Adrenal gland (tissue), 19 donors: ENCODE measurements at regions of chr14 and their contacts with region 1.

Region 1: DNA sequence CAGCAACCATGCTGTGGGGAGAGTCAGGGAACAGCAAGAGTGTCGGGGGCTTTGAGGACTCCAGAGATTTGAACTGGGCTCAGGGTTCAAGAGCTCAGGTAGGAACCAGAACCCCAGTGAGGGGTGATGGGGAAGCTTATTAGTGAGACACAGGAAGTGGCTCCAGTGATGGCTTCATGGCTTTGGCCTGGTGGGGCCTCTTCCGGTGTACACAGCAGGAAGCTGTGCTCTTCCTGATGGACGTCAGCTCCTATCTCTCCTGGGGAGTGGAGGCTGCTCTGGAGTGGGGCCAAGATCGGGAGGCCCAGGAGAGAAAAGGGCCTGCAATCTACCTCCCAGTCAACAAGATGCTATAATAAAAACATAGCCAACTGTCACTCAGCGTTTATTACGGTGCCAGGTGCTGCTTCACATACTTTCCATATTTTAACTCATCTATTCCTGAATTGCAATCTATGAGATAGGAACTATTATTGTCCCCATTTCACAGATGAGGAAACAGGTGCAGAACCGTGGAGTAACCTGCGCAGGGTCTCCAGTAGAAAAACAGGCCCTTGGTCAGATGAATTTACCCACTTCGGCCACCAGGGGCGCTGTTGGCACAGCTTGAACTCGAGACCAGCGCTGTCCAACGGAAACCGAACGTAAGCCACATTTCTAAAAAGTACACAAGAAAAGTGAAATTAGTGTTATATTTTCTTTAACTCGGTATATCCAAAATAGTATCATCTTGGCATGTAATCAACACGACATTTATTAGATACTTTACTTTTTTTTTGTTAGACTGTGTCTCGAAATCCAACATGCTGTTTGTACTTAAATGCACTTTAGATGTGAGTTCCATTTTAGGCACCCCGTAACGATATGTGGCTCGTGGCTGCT is 63.6 kb upstream of the DLK1 start:
- DNase-seq: peak; percentile 71 to 93 (median 80)
- H3K4me3 ChIP-seq: peak overlapping the region in 1 of 4 donors; percentile 32
- H3K27ac ChIP-seq: peak overlapping the region in 3 of 5 donors; percentile 73 to 97 (median 95)
- H3K4me1 ChIP-seq: peaks cover 20 to 39% of the 10 kb centered on the region in 2 donors
- H3K27me3 ChIP-seq: no peaks in the 10 kb centered on the region
- CTCF ChIP-seq: peak; percentile 86 to 98 (median 94)
- POLR2A ChIP-seq: no peak

Region 2: GRCh38 chr14:100828031-100828769 is 165.1 kb after region 1 on chr14:
- intact Hi-C with region 1: loop called in 1 of 2 experiments (anchors 5 kb)
- DNase-seq: peak; percentile 76 to 90 (median 82)
- H3K4me3 ChIP-seq: peak overlapping the region in 3 of 4 donors; percentile 39 to 59 (median 50)
- H3K27ac ChIP-seq: peak overlapping the region in 4 of 5 donors; percentile 59 to 90 (median 74)
- H3K4me1 ChIP-seq: peaks cover 0 to 16% of the 10 kb centered on the region in 2 donors
- H3K27me3 ChIP-seq: no peaks in the 10 kb centered on the region
- CTCF ChIP-seq: peak; percentile 20 to 79 (median 62)
- POLR2A ChIP-seq: peak in 1 of 2 donors; percentile 39